ENCODE measurements at regions of chr15 and their contacts with region 1.

Region 1: DNA sequence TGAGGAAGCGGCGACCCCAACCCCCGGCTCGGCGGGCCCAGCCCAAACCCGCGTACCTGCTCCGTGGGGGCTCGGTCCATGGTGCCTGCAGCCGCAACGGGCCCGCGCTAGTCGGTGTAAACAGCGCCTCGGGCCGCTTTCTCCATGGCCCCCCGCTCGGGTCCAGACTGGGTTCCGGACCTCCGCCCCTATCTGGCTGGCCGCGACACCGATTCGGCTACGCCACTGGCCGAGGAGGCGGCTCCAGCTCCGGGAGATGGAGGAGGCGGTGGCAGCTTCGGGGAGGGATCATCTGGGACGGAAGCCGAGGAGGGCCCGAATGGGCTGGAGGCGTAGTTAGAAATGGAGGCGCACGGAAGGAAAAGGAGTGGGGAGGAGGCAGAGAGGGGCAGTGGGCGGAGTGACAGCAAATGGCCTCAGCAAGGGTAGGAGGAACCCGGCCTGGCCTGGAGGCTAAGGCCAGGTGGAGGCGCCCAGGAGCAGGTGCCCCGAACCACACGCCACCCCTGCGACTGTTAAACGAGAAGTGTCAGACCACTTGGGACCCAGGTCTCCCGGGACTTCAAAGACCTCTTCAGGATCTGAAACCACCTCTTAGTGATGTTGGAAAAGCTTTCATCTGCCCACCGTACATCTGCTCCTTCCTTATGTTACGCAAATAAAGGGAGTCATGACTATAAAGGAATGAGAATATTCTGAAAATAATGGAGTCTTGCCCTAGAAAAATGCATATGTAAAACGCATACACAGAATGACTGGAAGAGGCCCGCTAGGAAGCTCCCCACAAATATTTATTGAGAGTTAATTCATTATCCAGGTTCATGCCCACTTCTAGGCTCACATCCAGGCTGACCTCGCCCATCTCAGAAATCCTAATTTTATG is at the start of gene SECISBP2L:
- DNase-seq: peak; percentile 91 to 99 (median 93)

Region 2: GRCh38 chr15:48800811-48801455 is 245.5 kb before region 1 on chr15:
- intact Hi-C with region 1: no loop called
- DNase-seq: no peak

Region 3: GRCh38 chr15:48877630-48878595 is 168.5 kb before region 1 on chr15 and contains the start of gene EID1:
- intact Hi-C with region 1: loop called (anchors 10 kb)
- DNase-seq: peak; percentile 87 to 98 (median 90)

Region 4: GRCh38 chr15:48975472-48976419 is 70.7 kb before region 1 on chr15:
- intact Hi-C with region 1: loop called (anchors 2 kb)
- DNase-seq: peak; percentile 77 to 98 (median 87)

Region 5: GRCh38 chr15:49088996-49089395 is 42.5 kb after region 1 on chr15:
- intact Hi-C with region 1: loop called (anchors 5 kb)
- DNase-seq: peak in 1 of 10 donors; percentile 6

Region 6: GRCh38 chr15:49101536-49101935 is 55.1 kb after region 1 on chr15:
- intact Hi-C with region 1: no loop called
- DNase-seq: no peak

Region 7: DNA sequence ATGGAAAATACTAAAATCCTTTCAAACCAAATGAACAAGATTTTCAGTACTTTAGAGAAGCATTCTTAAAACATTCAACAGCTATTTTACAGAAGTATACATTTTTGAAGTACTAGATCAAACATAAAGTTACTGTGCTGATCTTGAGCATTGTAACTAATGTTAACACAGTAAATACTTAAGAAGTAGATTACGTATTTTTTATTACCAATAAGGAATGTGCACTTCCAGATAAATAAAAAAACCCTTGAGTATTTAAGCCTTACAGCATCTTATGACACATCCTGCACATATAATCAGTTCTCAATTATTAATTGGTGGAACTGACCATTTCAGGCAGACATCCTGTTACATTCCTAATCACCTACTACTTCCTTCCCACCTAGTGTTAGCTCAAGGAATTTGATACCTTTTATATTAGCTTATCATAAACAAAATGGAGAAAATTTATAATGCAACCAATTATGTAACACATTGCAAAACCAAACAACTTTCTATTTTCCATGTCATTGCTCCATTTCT is 76.1 kb after region 1 on chr15:
- intact Hi-C with region 1: no loop called
- DNase-seq: no peak